Right ventricle myocardium superior (tissue), 1 donor: ENCODE measurements at regions of chr15 and their contacts with region 1.

Region 1: DNA sequence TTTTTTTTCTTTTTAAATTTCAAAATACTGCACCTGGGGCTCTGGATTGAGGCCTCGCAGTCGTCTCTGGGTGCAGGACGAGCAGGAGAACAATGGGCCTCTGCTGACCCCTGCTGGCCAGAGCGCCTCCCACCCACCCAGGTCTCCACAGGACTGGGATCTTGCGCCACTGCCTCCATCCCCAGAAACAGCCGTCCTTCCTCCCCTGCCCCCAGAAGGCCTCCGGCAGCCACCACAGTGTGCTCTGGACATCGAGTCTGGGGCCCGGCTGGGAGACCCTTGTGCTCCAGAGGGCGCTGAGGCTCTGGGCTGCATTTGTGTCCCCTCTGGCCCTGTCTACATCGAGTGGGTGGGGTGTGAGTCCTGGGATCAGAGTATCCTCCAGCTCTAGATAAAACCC is 6.6 kb upstream of the ACSBG1 start:
- DNase-seq: peak; percentile 92
- ATAC-seq: peak; percentile 96

Region 2: GRCh38 chr15:78129077-78129750 is 111.8 kb before region 1 on chr15:
- intact Hi-C with region 1: loop called (anchors 5 kb)
- DNase-seq: no peak
- ATAC-seq: no peak

Region 3: GRCh38 chr15:78177447-78177873 is 63.5 kb before region 1 on chr15:
- intact Hi-C with region 1: loop called (anchors 5 kb)
- DNase-seq: peak; percentile 60
- ATAC-seq: peak; percentile 68